Adrenal gland (tissue), 19 donors: ENCODE measurements at regions of chr6 and their contacts with region 1.

Region 1: DNA sequence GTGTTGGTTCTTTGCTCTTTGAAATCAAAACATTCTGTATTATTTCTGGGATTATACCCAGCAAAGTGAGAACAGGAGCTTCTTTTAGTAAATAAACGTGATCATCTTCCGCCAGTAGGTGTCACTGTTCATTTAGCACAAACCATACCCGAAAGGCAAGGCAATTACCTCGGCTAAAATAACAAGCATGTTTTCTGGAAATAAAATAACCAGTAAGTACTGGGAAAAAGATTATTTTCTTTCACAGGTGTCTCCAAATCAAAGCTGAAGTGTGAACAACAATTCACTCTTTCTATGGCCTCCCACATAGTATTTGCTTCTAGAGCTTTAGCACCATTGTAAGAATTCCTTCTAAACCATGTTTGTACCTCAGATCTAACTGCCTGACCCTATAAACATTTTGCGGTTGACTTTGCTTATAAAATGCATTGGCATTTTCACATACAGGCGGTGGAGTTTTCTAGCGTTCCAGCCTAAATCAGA is 144.6 kb upstream of the AGPAT4 start:
- DNase-seq: peak; percentile 32 to 76 (median 71)
- H3K4me3 ChIP-seq: no peak overlapping the region
- H3K27ac ChIP-seq: no peak overlapping the region
- H3K4me1 ChIP-seq: peaks cover 6 to 13% of the 10 kb centered on the region in 2 donors
- H3K27me3 ChIP-seq: no peaks in the 10 kb centered on the region
- CTCF ChIP-seq: peak; percentile 69 to 81 (median 72)
- POLR2A ChIP-seq: no peak

Region 2: GRCh38 chr6:160972111-160972510 is 446.4 kb before region 1 on chr6:
- intact Hi-C with region 1: no loop called
- DNase-seq: no peak
- H3K4me3 ChIP-seq: no peak overlapping the region
- H3K27ac ChIP-seq: no peak overlapping the region
- H3K4me1 ChIP-seq: peaks cover 0 to 16% of the 10 kb centered on the region in 2 donors
- H3K27me3 ChIP-seq: no peaks in the 10 kb centered on the region
- CTCF ChIP-seq: no peak
- POLR2A ChIP-seq: no peak

Region 3: DNA sequence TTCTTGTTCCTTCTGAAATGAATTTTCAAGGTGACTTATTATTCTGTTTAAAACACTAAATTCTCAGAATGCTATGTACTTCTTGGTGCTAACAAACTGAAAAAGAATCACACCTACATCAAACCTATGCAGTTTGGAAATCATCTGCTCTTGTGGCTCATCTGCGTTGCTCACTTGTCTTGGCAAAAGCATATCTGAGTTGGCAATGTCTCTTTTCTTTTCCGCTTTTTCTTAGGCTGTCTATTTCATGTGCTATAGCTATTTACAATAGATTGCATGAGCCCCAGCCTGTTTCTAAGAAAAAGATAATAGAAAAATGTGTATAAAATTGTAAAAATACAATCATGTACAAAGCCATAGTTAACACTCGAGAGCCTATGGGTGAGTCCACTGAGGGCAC is 204.3 kb after region 1 on chr6:
- intact Hi-C with region 1: loop called (anchors 10 kb)
- DNase-seq: peak in 1 of 7 donors; percentile 5
- H3K4me3 ChIP-seq: no peak overlapping the region
- H3K27ac ChIP-seq: no peak overlapping the region
- H3K4me1 ChIP-seq: peaks cover 0 to 8% of the 10 kb centered on the region in 2 donors
- H3K27me3 ChIP-seq: no peaks in the 10 kb centered on the region
- CTCF ChIP-seq: no peak
- POLR2A ChIP-seq: no peak

Region 4: DNA sequence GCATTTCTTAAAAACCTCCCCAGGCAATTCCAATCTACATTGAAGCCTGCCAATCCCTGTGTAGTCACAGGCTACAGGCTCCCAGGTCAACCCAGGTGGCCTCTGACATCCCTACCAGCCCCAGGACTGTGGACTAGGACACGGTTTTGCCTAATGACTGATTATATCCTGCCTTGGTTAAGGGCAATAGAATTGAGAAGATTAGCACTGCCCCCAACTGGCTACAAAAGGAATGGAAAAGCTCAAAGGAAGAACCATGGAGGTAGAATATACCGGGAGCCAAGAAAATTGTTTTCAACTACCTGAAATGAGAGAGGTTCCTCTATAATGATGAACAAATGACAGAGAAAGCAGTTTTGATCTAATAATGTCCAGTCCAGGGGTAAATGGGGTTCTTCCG is 276.5 kb after region 1 on chr6:
- intact Hi-C with region 1: loop called in 1 of 2 experiments (anchors 10 kb)
- DNase-seq: peak in 2 of 7 donors; percentile 8 to 24
- H3K4me3 ChIP-seq: no peak overlapping the region
- H3K27ac ChIP-seq: no peak overlapping the region
- H3K4me1 ChIP-seq: peaks cover 0 to 9% of the 10 kb centered on the region in 2 donors
- H3K27me3 ChIP-seq: no peaks in the 10 kb centered on the region
- CTCF ChIP-seq: peak; percentile 19 to 54 (median 46)
- POLR2A ChIP-seq: no peak